ENCODE measurements at regions of chr18 and their contacts with region 1.

Region 1: GRCh38 chr18:24346254-24346653 is 51.4 kb downstream of the OSBPL1A start:
- DNase-seq: no peak
- H3K4me3 ChIP-seq: no peak overlapping the region
- H3K27ac ChIP-seq: no peak overlapping the region
- H3K4me1 ChIP-seq: no peaks in the 10 kb centered on the region
- H3K27me3 ChIP-seq: no peaks in the 10 kb centered on the region
- CTCF ChIP-seq: no peak
- EP300 ChIP-seq: no peak
- POLR2A ChIP-seq: no peak

Region 2: DNA sequence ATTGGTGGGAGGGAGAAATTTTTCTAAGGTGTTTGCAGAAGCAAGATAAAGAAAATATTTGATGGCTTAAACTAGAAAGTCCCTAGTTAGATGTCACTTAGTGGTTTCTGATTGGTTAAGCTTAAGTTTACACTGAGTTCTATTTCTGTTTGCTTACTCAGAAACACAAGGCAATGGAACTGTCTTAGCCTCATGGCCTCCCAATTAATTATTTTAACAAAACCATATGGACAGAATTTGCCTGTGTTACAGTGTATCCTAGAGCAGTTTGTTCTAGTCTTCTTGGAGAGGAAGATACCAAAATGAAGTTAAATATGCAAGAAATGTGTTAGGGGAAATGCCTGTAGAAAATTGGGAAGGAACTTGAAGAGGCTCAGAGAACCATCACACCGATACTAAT is 75.6 kb after region 1 on chr18:
- intact Hi-C with region 1: no loop called
- DNase-seq: no peak
- H3K4me3 ChIP-seq: no peak overlapping the region
- H3K27ac ChIP-seq: no peak overlapping the region
- H3K4me1 ChIP-seq: no peaks in the 10 kb centered on the region
- H3K27me3 ChIP-seq: peaks cover 0 to 54% (median 13%) of the 10 kb centered on the region in 3 donors
- CTCF ChIP-seq: no peak
- EP300 ChIP-seq: no peak
- POLR2A ChIP-seq: no peak

Region 3: GRCh38 chr18:25814841-25815458 is 1468.7 kb after region 1 on chr18:
- intact Hi-C with region 1: loop called (anchors 10 kb)
- DNase-seq: no peak
- H3K4me3 ChIP-seq: no peak overlapping the region
- H3K27ac ChIP-seq: no peak overlapping the region
- H3K4me1 ChIP-seq: no peaks in the 10 kb centered on the region
- H3K27me3 ChIP-seq: no peaks in the 10 kb centered on the region
- CTCF ChIP-seq: no peak
- EP300 ChIP-seq: no peak
- POLR2A ChIP-seq: no peak

Measured in sigmoid colon (tissue), 7 donors.